Ascending aorta (tissue), 2 donors: ENCODE measurements at regions of chr4 and their contacts with region 1.

Region 1: DNA sequence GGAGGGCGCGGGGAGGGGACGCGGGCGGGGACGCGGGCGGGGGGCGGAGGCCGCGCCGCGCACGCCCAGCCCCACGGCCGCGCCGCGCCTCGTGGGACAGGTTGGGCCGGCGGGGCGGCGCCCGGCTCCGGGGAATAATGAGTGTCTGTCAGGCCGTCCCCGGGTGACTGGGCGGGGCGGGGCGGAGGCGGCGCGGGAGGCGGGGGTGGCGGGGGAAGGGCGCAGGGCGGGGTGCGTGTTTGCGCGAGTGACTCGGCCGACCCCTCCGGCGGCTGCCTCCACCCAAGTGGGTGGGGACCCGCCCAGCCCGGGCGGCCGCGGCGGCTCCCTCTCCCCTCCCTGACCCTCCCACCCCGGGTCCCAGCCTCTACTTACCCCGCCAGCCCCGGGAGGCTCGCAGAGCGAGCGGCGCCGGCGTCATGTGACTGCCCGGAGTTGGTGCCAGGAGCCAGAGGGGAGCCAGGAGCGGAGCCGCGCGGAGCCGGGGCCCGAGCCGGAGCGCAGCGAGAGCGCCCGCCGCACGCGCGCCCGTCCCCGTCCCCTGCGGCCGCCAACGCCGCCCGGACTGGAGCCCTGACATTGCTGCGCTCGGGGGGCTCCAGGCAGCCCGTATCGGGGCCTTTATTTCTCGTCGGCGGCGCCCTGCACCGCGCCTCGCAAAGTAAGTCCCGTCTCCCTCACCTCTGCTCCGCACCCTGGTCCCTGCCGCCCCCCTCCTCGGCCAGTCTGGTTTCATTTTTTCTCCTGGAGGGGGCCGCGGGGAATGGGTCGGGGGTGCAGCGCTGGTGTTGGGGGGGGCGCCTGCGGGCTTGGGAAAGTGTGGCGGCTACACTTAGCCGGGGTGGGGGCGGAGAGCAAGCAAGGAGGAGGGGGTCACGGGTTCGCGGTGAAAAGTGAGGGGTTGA is at the start of gene KLF3:
- DNase-seq: peak; percentile 86 to 97
- H3K4me3 ChIP-seq: peak within 1 kb of the TSS; percentile 83 to 99
- H3K27ac ChIP-seq: peak within 1 kb of the TSS; percentile 96 to 99
- H3K4me1 ChIP-seq: peaks cover 6 to 22% of the 10 kb centered on the region in 2 donors
- H3K27me3 ChIP-seq: no peaks in the 10 kb centered on the region
- CTCF ChIP-seq: no peak
- total RNA-seq, gene KLF3: 21.5 TPM

Region 2: GRCh38 chr4:37686373-37687193 is 977.5 kb before region 1 on chr4 and contains the start of gene RELL1:
- intact Hi-C with region 1: loop called (anchors 2 kb)
- DNase-seq: peak; percentile 98 to 100
- H3K4me3 ChIP-seq: peak within 1 kb of the TSS; percentile 97 to 100
- H3K27ac ChIP-seq: peak within 1 kb of the TSS; percentile 96 to 99
- H3K4me1 ChIP-seq: peaks cover 6 to 7% of the 10 kb centered on the region in 2 donors
- H3K27me3 ChIP-seq: no peaks in the 10 kb centered on the region
- CTCF ChIP-seq: no peak
- total RNA-seq, gene RELL1: 61.5 TPM

Region 3: DNA sequence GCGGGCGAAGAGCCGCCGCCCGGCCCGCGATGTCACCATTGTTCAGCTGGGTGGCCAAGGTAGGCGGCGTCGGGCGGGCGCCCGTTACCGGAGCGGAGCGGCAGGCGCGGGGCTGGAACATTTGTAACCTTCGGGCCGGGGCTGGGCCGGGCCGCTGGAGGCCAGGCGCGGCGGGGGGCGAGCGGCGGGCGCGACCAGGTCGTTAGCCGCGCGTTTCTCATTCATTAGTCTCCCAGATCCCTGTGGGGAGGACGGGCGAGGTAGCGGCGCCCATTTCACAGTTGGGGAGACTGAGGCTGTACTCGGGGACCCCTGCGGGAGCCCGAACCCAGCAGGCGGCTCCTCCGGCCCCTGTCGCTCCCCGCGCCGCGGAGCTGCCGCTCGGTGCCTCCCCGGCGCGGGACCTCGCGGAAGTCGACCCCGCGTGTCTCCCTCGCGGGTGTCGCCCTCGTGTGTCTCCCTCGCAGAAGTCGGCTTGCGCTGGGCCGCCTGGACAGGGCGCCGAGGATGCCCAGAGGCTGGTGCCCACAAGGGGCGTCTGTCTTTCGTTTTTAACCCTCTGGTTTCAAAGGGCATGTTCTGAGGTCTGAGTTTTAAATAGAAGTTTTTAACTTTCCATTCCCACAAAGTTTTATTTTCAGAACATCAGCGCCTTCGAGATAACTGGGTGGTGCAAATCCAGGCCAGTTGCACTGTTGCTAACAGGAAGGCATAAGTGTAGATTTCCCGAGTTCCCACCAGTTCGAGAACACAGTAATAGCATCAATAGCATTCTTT is 686.4 kb before region 1 on chr4:
- intact Hi-C with region 1: loop called (anchors 5 kb)
- DNase-seq: peak; percentile 44 to 90
- H3K4me3 ChIP-seq: peak overlapping the region; percentile 76 to 99
- H3K27ac ChIP-seq: peak overlapping the region; percentile 97 to 99
- H3K4me1 ChIP-seq: peaks cover 4 to 26% of the 10 kb centered on the region in 2 donors
- H3K27me3 ChIP-seq: no peaks in the 10 kb centered on the region
- CTCF ChIP-seq: peak; percentile 76 to 86 (median 78)

Region 4: DNA sequence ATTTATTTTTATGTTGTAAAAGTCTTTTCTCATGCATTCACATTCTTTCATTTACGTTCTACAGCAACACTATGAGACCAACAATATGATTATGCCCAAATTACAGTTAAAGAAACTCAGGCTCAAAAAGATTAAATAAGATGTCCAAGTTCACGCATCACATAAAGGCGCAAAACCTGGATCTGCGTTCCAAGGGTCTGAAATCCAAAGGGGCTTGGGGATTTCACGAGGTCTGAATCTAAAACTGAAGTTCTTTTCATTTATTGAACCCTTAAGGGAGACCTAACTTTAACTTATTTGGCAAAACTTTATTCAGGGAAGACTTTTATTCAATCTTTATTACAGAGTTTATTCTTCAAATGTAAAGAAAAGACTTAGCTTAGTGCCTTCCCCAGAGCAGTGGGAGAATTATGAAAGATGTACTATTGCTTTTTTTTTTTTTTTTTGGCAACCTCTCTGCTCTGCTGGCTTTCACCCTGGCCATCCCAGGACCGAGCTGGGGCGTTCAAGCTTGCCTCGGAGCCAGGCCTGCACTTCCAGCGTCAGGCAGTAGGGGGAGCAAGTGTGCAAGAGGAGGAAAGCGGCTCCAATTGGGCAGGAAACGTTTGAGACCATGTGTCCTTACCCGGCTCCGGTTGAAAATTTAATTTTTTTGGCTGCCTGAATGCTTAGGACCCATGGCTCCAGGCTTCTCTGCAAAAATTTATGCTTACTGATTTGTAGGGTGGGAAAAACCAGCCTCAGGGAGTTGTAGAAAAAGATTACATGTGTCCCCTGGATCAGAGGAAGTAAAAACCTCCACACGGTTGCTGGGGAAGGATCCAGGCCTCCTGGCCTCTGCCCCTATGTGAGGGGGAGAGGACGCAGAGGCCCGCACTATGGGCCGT is 344.4 kb before region 1 on chr4:
- intact Hi-C with region 1: loop called (anchors 2 kb)
- DNase-seq: peak; percentile 75 to 97
- H3K4me3 ChIP-seq: peak overlapping the region; percentile 46 to 52
- H3K27ac ChIP-seq: peak overlapping the region; percentile 83 to 87
- H3K4me1 ChIP-seq: peaks cover 9 to 15% of the 10 kb centered on the region in 2 donors
- H3K27me3 ChIP-seq: no peaks in the 10 kb centered on the region
- CTCF ChIP-seq: peak; percentile 96 to 100 (median 99)

Region 5: DNA sequence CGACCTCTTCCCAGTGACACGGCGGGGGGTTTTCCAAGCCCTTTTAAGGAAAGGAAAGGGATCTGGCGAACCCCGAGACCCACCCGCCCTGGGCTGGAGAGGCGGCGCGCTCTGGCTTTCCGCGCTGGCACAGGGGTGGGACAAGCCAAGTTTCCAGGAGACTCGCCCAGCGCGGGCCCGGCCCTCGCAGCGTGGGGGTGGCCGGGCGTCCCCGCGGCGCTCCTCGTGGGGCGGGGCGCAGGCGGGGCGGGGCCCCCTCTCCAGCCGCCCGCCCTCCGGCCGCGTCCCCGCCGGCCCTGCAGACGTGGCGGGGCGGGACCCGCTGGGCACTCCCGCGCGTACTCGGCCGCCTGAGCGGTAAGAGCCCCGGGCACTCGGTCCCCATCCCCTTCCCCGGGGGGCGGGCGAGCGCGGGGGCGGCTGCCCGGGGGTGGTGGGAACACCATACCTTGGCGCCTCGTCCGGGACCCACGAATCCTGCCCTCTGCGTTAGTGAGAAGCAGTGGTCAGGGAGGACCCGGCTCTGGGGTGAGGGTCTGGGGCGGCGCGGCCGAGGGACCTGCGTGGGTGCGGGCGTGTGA is 203.5 kb after region 1 on chr4 and contains the start of gene FAM114A1:
- intact Hi-C with region 1: loop called (anchors 5 kb)
- DNase-seq: peak in 1 of 2 donors; percentile 89
- H3K4me3 ChIP-seq: peak within 1 kb of the TSS; percentile 74 to 83
- H3K27ac ChIP-seq: peak within 1 kb of the TSS; percentile 94 to 96
- H3K4me1 ChIP-seq: peaks cover 0 to 13% of the 10 kb centered on the region in 2 donors
- H3K27me3 ChIP-seq: no peaks in the 10 kb centered on the region
- CTCF ChIP-seq: no peak
- total RNA-seq, gene FAM114A1: 45.7 TPM

Region 6: DNA sequence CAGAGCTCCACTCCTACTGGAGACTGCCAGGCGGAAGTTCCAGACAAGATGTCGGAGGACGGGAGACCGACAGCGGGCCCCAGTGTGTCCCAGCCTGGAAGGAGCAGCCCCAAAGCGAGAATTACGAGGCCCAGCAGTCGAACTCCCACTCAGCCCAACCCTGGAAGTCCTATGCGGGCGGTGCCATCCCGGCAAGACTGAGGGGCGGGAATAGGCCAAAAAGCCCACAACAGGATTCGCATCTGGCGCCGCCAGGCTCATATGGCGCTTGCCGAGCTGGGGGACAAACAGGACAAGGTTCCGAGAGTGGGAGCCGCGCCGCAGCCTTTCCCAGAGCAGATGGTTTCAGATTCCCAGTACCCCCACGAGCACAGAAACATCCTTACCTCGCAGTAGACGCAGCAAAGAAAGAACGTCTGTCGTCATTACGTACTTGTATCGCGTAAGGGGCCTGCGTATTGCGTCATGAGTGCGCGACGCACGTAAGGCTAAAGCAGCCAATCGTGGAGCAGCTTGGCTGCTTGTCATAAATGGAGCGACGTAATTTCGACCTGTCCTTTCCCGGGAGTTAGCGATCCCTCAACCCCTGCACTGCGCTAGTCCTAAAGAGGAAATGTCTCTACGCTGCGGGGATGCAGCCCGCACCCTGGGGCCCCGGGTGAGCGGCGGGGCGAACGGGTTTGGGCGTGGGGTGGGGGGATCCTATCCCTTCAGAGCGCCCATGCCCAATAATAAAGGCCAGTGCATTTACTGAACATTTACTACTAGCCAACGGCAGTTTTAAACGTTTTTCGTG is 794.6 kb after region 1 on chr4 and contains the starts of genes LIAS and RPL9:
- intact Hi-C with region 1: loop called (anchors 5 kb)
- DNase-seq: peak; percentile 90 to 98
- H3K4me3 ChIP-seq: peak within 1 kb of the TSS; percentile 82 to 96
- H3K27ac ChIP-seq: peak within 1 kb of the TSS; percentile 96 to 98
- H3K4me1 ChIP-seq: peaks cover 2 to 16% of the 10 kb centered on the region in 2 donors
- H3K27me3 ChIP-seq: no peaks in the 10 kb centered on the region
- CTCF ChIP-seq: peak in 1 of 3 experiments; percentile 24
- total RNA-seq, gene LIAS: 2.9 TPM
- total RNA-seq, gene RPL9: 1,701 TPM